GM13976 (cell line): ENCODE measurements at regions of chr11 and their contacts with region 1.

Region 1: DNA sequence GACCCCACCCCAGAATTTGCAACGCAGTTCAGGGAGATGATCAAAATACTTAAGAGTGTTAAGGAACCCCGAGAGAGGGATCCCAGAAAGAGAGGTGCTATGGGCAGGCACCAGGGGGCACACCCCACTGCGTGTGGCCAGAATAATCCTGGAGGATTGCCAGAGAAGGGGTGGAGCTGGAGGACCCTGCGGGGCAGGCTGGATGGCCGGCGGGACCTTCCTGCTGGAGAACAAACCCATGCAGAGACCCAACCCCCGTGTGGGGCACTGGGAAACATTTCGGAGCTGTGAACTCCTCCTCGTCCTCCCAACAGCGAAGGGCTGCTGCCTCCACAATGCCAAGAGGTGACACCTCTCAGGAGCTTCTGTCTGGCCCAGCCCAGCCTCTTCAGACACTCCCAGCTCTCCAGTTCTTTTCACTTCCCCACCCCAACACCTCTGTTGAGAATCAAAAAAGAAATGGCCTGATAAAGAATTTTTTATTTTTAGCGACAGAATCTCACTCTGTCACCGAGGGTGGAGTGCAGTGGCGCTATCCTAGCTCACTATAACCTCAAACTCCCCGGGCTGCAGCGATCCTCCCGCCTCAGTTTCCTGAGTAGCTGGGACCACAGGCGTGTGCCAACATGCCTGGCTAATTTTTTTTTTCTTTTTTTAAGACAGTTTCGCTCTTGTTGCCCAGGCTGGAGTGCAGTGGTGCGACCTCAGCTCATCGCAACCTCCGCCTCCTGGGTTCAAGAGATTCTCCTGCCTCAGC is 25.6 kb downstream of the RHOD start:
- DNase-seq: no peak
- CTCF ChIP-seq: no peak

Region 2: DNA sequence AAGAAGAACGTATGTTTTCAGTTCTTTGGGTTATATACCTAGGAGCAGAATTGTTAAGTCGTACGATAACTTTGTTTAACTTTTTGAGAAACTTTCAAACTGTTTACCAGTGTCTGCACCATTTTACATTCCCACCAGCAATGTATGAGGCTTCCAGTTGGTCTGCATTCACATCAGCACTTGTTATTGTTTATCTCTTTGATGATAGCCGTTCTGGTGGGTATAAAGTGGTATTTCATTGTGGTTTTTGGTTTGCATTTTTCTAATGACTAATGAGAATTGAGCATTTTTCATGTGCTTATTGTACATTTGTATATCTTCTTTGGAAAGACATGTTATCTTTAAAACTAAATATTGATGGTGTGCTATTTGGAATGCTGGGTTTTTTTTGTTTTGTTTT is 96.7 kb after region 1 on chr11:
- in situ Hi-C with region 1: loop called (anchors 10 kb)
- DNase-seq: no peak
- CTCF ChIP-seq: no peak